ENCODE measurements at regions of chrX and their contacts with region 1.

Region 1: GRCh38 chrX:10111364-10112148 is 45.2 kb upstream of the CLCN4 start:
- DNase-seq: peak; percentile 42
- H3K4me3 ChIP-seq: no peak overlapping the region
- H3K27ac ChIP-seq: no peak overlapping the region
- H3K4me1 ChIP-seq: no peaks in the 10 kb centered on the region
- H3K27me3 ChIP-seq: no peaks in the 10 kb centered on the region

Region 2: DNA sequence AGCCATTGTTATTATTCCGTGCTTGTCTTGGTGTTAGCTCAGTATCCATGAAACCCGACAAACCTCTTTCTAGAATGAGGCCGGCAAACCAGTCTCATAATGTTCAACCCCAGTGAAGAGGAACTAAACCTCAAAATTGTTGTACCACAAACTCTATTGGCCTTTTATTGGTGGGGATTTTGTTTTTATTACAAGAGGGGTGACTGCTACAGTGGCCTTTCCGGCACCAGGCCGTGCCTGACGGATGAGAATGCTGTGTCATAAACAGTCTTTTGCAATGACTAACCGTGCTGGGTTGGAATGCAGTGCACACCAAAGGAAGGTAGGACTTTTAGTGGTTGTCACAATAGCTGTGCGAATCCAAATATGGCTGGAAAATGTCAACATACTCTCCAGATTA is 264.5 kb before region 1 on chrX:
- in situ Hi-C with region 1: no loop called
- DNase-seq: peak; percentile 75
- H3K4me3 ChIP-seq: no peak overlapping the region
- H3K27ac ChIP-seq: peak overlapping the region; percentile 74
- H3K4me1 ChIP-seq: peaks cover 13% of the 10 kb centered on the region
- H3K27me3 ChIP-seq: no peaks in the 10 kb centered on the region

Region 3: DNA sequence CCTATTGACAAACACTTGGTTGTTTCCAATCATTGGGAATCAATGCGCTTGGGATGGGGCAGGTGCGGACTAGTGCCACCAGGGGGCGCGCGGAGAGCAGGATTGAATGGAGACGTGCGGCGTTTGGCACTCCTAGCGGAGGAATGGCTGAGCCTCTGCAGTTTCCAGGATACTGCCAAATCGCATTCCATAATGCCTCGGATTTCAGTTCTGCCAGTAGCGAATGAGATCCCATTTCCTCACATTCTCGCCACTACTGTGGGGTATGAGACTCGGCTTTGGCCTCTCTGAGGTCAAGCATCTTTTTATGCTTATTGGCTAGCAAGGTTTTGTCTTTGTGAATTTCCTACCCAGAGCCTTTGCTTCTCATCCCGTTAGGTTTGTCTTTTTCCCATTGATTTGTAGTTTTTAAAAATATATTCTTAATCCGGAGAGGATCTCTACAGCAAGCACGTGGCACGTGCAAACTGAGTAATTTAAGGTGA is 115.7 kb before region 1 on chrX:
- in situ Hi-C with region 1: loop called (anchors 5 kb)
- DNase-seq: peak; percentile 85
- H3K4me3 ChIP-seq: peak overlapping the region; percentile 34; the same call in 1 of the 2 replicates
- H3K27ac ChIP-seq: no peak overlapping the region
- H3K4me1 ChIP-seq: no peaks in the 10 kb centered on the region
- H3K27me3 ChIP-seq: no peaks in the 10 kb centered on the region

Region 4: GRCh38 chrX:10512258-10512657 is 400.7 kb after region 1 on chrX:
- in situ Hi-C with region 1: no loop called
- DNase-seq: no peak
- H3K4me3 ChIP-seq: no peak overlapping the region
- H3K27ac ChIP-seq: no peak overlapping the region
- H3K4me1 ChIP-seq: 0 out of 2 replicates have a peak, but pooled peaks cover 17% of the 10 kb centered on the region
- H3K27me3 ChIP-seq: no peaks in the 10 kb centered on the region